ENCODE measurements at regions of chr1 and their contacts with region 1.

Region 1: DNA sequence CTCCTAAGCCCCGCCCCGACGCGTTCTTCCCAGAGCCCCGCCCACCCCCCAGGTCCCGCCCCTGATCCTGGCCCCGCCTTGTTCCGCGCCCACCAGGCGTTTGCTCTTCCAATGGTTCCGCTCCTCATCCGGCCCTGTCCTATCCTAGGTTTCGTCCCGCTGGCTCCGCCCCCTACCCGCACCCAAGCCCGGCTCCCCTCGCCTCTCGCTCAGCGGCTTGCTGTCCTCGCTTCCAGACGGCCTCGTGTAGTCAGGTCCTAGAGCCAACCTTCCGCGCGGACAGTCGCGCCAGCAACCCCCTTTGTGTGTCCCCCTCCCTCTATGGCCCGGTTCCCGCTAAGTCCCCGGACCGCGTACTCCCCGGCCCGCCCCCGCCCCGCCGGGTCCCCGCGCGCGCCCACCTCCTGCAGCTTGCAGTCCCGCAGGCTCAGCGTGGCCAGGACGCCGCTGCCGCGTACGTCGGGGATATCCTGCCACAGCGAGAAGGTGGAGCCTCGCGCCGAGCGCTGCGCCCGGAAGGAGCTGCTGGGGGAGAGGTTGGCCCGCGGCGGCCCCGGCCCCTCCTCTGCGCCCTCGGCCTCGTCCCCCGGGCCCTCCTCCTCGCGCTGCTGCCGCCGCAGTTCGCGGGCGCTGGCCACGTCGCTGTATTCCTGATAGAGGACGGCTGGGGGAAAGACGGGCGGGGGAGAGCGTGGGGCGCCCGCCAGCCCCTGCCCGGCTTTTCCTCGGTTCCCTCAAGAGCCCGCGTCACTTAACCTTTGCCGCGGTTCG is 5.7 kb downstream of the ARHGEF19 start:
- DNase-seq: peak; percentile 98
- H3K4me3 ChIP-seq: peak overlapping the region; percentile 41 to 57 (median 50)
- H3K27ac ChIP-seq: peak overlapping the region; percentile 49
- H3K4me1 ChIP-seq: peaks cover 9% of the 10 kb centered on the region
- H3K27me3 ChIP-seq: no peaks in the 10 kb centered on the region
- CTCF ChIP-seq: no peak
- POLR2A ChIP-seq: peak; percentile 76

Region 2: DNA sequence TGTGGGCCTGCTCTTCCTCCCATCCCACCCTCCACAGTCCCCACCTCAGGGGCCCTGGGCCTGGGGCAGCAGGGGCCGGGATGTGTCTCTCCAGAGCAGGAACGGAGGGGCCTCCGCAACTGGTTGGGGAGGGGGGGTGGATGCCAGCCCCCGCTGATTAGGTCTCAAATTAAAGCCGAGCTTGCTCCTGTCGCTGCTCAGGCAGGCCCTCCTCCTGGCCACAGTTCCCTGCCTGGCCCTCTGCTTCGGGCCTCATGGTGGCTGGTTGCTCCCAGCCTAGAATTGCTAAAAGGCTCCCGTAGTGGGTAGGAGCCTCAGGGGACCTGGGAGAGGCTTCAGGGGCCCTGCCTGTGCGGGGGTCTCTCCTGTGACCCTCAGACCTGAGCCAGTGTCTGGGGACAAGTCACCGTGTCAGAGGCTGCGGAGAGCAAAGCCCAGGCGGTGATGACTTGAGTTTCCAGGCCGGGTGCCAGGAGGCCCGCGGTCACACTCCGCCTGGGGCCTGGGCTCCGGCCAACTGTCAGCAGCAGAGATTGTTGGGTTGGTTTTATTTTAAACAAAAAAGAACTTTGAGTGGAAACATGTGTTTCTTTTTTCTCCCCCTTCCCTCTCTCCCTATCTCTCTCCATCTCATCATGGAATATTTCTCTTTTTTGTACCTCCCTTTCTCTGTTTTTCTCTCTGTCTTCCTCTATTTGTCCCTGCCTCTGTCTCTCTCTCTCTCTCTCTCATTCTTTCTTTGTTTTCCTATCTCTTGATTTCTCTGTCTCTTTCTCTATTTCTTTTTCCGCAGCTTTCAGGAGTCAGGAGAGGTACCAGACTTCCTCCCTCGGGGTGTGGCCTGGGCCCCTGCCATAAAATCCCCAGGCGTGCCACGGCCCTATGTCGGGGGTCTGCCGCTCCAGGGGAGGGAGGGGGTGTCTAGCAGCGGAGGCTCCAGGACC is 30.9 kb before region 1 on chr1:
- CTCF ChIA-PET with region 1: no interaction called
- POLR2A ChIA-PET with region 1: no interaction called
- dilution Hi-C with region 1: no loop called
- intact Hi-C with region 1: no loop called
- DNase-seq: peak; percentile 87
- H3K4me3 ChIP-seq: no peak overlapping the region
- H3K27ac ChIP-seq: peak overlapping the region; percentile 84
- H3K4me1 ChIP-seq: peaks cover 43% of the 10 kb centered on the region
- H3K27me3 ChIP-seq: no peaks in the 10 kb centered on the region
- CTCF ChIP-seq: no peak
- POLR2A ChIP-seq: peak; percentile 16

Region 3: DNA sequence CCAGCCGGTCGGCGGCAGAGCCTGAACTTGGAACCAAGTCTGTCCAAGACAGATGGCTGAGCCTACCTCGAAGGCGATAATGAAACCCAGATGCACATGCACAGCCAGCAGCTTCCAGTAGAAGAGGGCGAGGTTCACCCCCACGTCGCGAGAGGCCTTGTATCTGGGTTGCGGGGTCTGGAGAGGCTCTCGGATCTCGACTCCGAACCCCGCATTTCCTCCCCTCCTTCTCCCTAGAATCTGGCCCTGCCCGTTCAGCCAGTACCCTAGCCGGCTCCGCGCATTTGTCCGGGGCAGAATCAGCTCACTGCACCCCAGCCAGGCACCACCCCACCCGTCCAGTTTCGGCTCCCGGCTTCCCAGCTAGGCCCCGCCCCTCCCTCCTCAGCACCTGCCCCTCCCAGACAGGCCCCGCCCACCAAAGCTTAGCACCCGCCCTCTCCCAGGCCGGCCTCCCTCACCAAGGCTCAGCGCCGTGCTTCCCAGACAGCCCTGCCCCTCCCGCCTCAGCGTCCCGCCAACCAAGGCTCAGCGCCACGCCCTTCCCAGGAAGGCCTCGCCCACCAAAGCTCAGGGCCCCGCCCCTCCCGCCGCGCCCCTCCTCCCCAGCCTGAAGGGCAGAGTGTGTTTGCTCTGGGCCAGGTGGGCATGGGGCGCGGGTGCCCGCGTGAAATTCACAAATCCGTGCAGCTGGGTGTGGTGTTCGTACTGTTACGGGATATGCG is 10.5 kb after region 1 on chr1:
- CTCF ChIA-PET with region 1: interaction called, 10 read pairs
- POLR2A ChIA-PET with region 1: interaction called, 8 read pairs
- dilution Hi-C with region 1: no loop called
- intact Hi-C with region 1: loop called (anchors 1 kb)
- DNase-seq: peak; percentile 96
- H3K4me3 ChIP-seq: peak overlapping the region; percentile 39 to 58 (median 42)
- H3K27ac ChIP-seq: no peak overlapping the region
- H3K4me1 ChIP-seq: peaks cover 8% of the 10 kb centered on the region
- H3K27me3 ChIP-seq: peaks cover 0 to 2% of the 10 kb centered on the region in 2 experiments
- CTCF ChIP-seq: no peak
- POLR2A ChIP-seq: no peak

Region 4: GRCh38 chr1:16236511-16237342 is 30.0 kb after region 1 on chr1 and contains the start of gene CPLANE2:
- CTCF ChIA-PET with region 1: interaction called, 4 read pairs
- POLR2A ChIA-PET with region 1: no interaction called
- dilution Hi-C with region 1: no loop called
- intact Hi-C with region 1: loop called (anchors 2 kb)
- DNase-seq: peak; percentile 89
- H3K4me3 ChIP-seq: peak within 1 kb of the TSS; percentile 2 to 53 (median 47)
- H3K27ac ChIP-seq: peak within 1 kb of the TSS; percentile 63
- H3K4me1 ChIP-seq: peaks cover 15% of the 10 kb centered on the region
- H3K27me3 ChIP-seq: no peaks in the 10 kb centered on the region
- CTCF ChIP-seq: no peak
- POLR2A ChIP-seq: peak; percentile 73
- total RNA-seq, gene CPLANE2: 3.7 and 3.9 TPM in 2 replicates

Region 5: DNA sequence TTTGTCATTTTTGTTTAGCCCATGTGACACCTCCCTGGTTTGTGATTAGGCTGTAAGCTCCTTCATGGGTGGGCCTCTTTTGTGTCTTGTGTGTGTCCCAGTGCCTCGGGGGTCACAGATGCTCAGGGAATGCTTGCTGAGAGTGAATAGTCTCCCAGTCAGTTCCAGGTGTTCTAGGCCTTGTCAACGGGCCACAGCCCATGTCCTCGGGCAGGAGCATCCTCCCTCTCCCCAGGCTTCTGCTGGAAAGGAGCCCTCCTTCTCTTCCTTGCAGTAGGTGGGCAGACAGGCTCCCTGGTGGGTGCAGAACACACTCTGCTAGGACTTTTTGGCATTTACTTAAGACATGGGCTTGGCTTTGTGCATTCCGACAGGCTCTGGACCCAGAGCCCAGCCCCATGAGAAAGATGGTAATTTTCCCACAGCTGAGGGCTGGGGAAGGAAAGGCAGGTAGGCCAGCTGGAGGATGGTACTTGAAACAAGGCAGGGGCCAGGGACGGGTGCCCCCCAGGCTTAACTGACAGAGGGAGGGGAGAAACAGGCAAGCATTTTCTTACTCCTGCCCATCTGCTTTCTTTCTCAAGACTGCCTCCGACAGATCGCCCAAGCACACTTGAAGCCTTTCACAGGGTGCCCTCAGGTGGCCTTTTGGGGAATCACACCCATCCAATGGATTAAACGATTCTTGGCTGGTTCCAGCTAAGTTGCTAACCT is 37.4 kb after region 1 on chr1:
- CTCF ChIA-PET with region 1: interaction called, 11 read pairs
- POLR2A ChIA-PET with region 1: no interaction called
- dilution Hi-C with region 1: no loop called
- intact Hi-C with region 1: loop called (anchors 1 kb)
- DNase-seq: peak; percentile 87
- H3K4me3 ChIP-seq: no peak overlapping the region
- H3K27ac ChIP-seq: no peak overlapping the region
- H3K4me1 ChIP-seq: peaks cover 17% of the 10 kb centered on the region
- H3K27me3 ChIP-seq: no peaks in the 10 kb centered on the region
- CTCF ChIP-seq: peak; percentile 83 to 85
- POLR2A ChIP-seq: no peak

Region 6: DNA sequence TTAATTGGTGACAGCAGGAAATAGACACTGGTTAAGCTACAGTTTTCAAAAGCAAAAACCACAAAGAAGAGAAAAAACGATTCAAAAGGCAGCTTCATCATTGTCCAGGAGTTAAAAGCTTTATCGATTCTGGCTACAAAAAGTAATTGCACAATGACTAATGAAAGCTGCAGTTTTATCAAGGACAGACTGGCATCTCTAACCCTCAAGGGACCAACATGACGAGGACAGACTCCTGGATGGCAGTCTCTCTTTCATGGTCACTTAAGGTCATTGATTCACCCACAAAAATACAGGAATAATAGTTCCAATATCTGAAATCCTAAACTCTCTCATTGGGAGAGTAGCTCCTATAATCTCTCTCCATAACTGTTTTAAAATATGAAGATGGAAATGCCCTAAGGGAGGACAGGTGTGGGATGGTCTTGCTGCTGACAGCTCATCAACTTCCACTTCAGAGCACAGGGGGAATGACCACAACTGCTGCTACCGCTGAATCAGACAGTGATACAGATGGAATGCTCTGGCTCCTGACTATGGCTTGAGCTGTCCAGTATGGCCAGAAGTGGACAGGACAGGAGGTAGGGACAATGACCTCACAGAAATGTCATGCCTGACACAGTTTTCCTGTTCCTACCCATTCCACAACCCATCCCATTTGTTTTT is 47.7 kb after region 1 on chr1:
- CTCF ChIA-PET with region 1: no interaction called
- POLR2A ChIA-PET with region 1: no interaction called
- dilution Hi-C with region 1: no loop called
- intact Hi-C with region 1: no loop called
- DNase-seq: no peak
- H3K4me3 ChIP-seq: no peak overlapping the region
- H3K27ac ChIP-seq: no peak overlapping the region
- H3K4me1 ChIP-seq: peaks cover 8% of the 10 kb centered on the region
- H3K27me3 ChIP-seq: no peaks in the 10 kb centered on the region
- CTCF ChIP-seq: no peak
- POLR2A ChIP-seq: no peak

Region 7: GRCh38 chr1:16351994-16352841 is 145.5 kb after region 1 on chr1 and contains the start of gene FBXO42:
- CTCF ChIA-PET with region 1: no interaction called
- POLR2A ChIA-PET with region 1: no interaction called
- dilution Hi-C with region 1: no loop called
- intact Hi-C with region 1: loop called (anchors 5 kb)
- DNase-seq: peak; percentile 96
- H3K4me3 ChIP-seq: peak within 1 kb of the TSS; percentile 66 to 88 (median 85)
- H3K27ac ChIP-seq: peak within 1 kb of the TSS; percentile 86
- H3K4me1 ChIP-seq: peaks cover 26% of the 10 kb centered on the region
- H3K27me3 ChIP-seq: no peaks in the 10 kb centered on the region
- CTCF ChIP-seq: peak; percentile 36 to 50
- POLR2A ChIP-seq: peak; percentile 80
- total RNA-seq, gene FBXO42: 16.3 and 17.3 TPM in 2 replicates

Region 8: DNA sequence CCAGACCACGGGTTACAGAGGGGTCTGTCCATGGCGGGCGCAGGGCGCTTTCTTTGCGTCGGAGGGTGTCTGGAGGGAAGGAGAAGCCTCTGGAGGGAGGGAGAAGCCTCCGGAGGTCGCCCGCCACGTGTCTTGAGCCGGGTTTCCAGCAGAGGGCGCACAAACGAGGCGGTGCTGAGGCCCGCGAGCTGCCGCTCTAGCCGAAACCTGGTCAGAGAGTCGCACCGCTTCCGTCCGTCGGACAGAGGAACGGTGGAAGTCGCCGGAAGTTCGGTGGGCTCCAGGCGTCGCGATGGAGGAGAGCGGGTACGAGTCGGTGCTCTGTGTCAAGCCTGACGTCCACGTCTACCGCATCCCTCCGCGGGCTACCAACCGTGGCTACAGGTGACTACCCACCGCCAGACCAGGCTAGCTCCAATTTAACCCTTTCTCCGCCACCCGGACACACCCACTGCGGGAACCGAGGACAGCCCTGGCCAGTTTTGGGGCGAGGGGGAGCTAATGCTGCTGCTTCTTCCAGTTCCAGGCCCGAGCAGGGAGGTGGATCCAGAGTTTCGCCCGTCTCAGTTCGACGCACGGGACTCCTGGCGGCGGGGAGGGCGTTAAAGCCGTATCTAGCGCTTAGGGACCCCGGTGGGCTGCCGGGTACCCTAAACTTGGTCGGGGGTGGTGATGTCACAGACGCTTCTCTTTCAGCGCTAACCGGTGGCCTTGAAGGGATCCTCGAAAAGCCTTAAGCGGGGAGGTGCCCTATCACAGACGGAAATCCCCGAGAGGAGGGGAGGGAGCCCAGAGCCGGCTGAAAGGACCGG is 233.9 kb after region 1 on chr1 and contains the start of gene NECAP2:
- CTCF ChIA-PET with region 1: no interaction called
- POLR2A ChIA-PET with region 1: no interaction called
- dilution Hi-C with region 1: no loop called
- intact Hi-C with region 1: loop called (anchors 10 kb)
- DNase-seq: peak; percentile 93
- H3K4me3 ChIP-seq: peak within 1 kb of the TSS; percentile 59 to 95 (median 92)
- H3K27ac ChIP-seq: peak within 1 kb of the TSS; percentile 29
- H3K4me1 ChIP-seq: peaks cover 12% of the 10 kb centered on the region
- H3K27me3 ChIP-seq: no peaks in the 10 kb centered on the region
- CTCF ChIP-seq: peak; percentile 95 to 97
- POLR2A ChIP-seq: peak; percentile 96
- total RNA-seq, gene NECAP2: 101 and 107 TPM in 2 replicates

Measured in endothelial cell of umbilical vein (primary cell).